Activated CD4-positive, alpha-beta T cell treated with anti-CD3 and anti-CD28 coated beads, Interleukin-2, amount 10 ng/mL, durations not matched to agents 24 days and 14 days (primary cell): ENCODE measurements at regions of chr6 and their contacts with region 1.

Region 1: DNA sequence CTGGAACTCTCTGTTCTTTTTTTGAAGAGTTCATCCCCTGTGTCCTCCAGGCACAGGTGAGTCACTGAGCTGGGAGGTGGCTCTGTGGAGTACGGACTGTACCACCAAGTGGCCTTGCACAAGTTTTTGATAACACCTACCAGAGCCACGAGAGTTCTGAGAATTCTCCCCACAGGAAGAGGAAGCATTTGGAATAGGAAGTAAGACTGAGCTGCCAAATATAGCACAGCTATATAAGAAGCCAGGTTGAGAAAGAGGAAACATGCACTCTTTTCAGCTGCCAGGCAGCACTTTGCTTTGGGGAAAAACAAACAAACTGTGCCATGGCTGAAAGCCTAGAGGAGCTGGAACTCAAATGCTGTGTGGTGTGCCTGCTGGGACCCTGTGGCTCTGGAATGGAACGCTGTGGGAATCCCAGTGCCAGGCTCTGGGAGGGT is 70.8 kb upstream of the RIPOR2 start:
- DNase-seq: peak; percentile 88
- H3K4me3 Mint-ChIP-seq: peak overlapping the region; percentile 64
- H3K27ac Mint-ChIP-seq: peak overlapping the region; percentile 93
- H3K4me1 Mint-ChIP-seq: peaks cover 58% of the 10 kb centered on the region
- H3K27me3 Mint-ChIP-seq: no peaks in the 10 kb centered on the region

Region 2: DNA sequence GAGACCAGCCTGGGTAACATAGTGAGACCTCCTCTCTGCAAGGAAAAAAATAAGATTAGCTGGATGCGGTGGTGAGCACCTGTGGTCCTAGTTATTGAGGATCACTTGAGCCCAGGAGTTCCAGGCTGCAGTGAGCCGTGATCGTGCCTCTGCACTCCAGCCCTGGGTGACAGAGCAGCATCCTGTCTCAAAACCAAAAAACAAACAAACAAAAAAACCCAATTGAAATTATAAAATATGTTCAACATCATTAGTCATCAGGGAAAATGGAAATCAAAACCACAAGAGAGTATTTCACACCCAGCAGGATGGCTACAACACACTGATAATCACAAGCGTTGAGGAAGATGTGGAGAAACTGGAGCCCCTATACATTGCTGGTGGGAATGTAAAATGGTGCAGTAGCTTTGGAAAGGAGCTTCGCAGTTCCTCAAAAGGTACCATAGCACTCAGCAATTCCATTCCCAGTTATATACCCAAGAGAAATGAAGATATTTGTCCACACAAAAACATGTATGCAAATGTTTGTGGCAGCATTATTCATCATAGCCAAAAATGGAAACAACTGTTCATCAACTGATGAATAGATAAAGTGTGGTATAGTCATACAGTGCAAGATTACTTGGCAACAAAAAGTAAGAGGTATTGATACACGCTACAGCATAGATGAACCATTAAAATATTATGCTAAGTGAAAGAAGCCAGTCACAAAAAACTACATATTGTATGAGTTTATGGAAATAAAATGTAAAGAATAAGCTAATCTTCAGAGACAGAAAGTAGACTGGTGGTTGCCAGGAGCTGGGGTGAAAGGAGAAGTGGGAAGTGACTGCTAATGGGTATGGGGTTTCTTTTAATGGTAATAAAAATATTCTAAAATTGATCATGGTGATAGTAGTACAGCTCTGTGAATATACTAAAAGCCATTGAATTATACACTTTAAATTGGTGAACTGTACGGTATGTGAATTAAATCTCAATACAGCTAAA is 32.1 kb before region 1 on chr6:
- intact Hi-C with region 1: loop called (anchors 1 kb)
- DNase-seq: peak; percentile 71
- H3K4me3 Mint-ChIP-seq: peak overlapping the region; percentile 60
- H3K27ac Mint-ChIP-seq: peak overlapping the region; percentile 91
- H3K4me1 Mint-ChIP-seq: peaks cover 31% of the 10 kb centered on the region
- H3K27me3 Mint-ChIP-seq: no peaks in the 10 kb centered on the region

Region 3: GRCh38 chr6:25027221-25027916 is 20.8 kb after region 1 on chr6:
- intact Hi-C with region 1: loop called (anchors 1 kb)
- DNase-seq: peak; percentile 93
- H3K4me3 Mint-ChIP-seq: peak overlapping the region; percentile 83
- H3K27ac Mint-ChIP-seq: peak overlapping the region; percentile 90
- H3K4me1 Mint-ChIP-seq: peaks cover 39% of the 10 kb centered on the region
- H3K27me3 Mint-ChIP-seq: no peaks in the 10 kb centered on the region